ENCODE measurements at regions of chr7 and their contacts with region 1.

Region 1: GRCh38 chr7:113159746-113160339 is 41.5 kb upstream of the SMIM30 start:
- DNase-seq: no peak
- H3K4me3 Mint-ChIP-seq: no peak overlapping the region
- H3K27ac Mint-ChIP-seq: no peak overlapping the region
- H3K4me1 Mint-ChIP-seq: no peaks in the 10 kb centered on the region
- H3K27me3 Mint-ChIP-seq: peaks cover 12% of the 10 kb centered on the region

Region 2: GRCh38 chr7:112665726-112666125 is 494.1 kb before region 1 on chr7:
- intact Hi-C with region 1: no loop called
- DNase-seq: no peak
- H3K4me3 Mint-ChIP-seq: no peak overlapping the region
- H3K27ac Mint-ChIP-seq: no peak overlapping the region
- H3K4me1 Mint-ChIP-seq: no peaks in the 10 kb centered on the region
- H3K27me3 Mint-ChIP-seq: no peaks in the 10 kb centered on the region

Region 3: GRCh38 chr7:113414401-113415035 is 254.7 kb after region 1 on chr7:
- intact Hi-C with region 1: loop called (anchors 10 kb)
- DNase-seq: no peak
- H3K4me3 Mint-ChIP-seq: no peak overlapping the region
- H3K27ac Mint-ChIP-seq: no peak overlapping the region
- H3K4me1 Mint-ChIP-seq: no peaks in the 10 kb centered on the region
- H3K27me3 Mint-ChIP-seq: no peaks in the 10 kb centered on the region